ENCODE measurements at regions of chr2 and their contacts with region 1.

Region 1: DNA sequence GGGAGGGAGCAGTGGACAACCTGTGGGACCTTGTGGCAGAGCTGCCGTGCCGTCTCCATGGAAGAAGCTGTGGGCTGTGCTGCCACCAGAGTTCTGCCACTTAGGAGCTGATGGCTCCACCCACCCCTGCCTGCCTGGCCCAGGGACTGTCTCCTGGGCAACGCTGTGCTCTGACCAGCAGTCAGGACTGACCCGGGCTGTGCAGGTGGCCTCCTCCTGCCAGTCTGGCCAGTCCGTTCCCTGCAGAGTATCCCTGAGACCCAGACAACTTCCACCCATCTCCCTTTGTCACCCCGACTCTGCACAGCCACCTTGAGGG is 12.8 kb downstream of the ASIC4 start:
- DNase-seq: no peak

Region 2: GRCh38 chr2:219475697-219476651 is 51.1 kb before region 1 on chr2:
- intact Hi-C with region 1: loop called (anchors 5 kb)
- DNase-seq: no peak

Region 3: DNA sequence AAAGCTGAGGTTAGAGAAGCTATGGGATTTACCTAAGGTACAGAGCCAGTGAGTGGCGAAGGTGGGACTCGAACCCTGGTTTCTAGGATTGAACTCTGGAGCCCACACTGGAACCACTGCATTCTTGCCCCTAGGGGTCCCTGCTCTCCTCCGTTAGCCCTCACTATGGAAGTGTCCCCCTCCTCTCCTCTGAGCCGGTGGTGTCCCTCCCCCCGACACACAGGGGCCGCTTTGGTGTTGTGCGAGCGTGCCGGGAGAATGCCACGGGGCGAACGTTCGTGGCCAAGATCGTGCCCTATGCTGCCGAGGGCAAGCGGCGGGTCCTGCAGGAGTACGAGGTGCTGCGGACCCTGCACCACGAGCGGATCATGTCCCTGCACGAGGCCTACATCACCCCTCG is 36.8 kb before region 1 on chr2:
- intact Hi-C with region 1: no loop called
- DNase-seq: no peak

Region 4: GRCh38 chr2:219681694-219682300 is 154.8 kb after region 1 on chr2:
- intact Hi-C with region 1: no loop called
- DNase-seq: no peak